Activated CD4-positive, alpha-beta T cell treated with anti-CD3 and anti-CD28 coated beads for 36 hours (primary cell): ENCODE measurements at regions of chr7 and their contacts with region 1.

Region 1: GRCh38 chr7:44490351-44491200 is at the start of gene NUDCD3:
- DNase-seq: peak; percentile 88
- ATAC-seq: peak; percentile 74
- H3K4me3 Mint-ChIP-seq: peak within 1 kb of the TSS; percentile 86
- H3K27ac Mint-ChIP-seq: peak within 1 kb of the TSS; percentile 100
- H3K4me1 Mint-ChIP-seq: peaks cover 42% of the 10 kb centered on the region
- H3K27me3 Mint-ChIP-seq: peaks cover 3% of the 10 kb centered on the region
- total RNA-seq, gene NUDCD3: 70.3 to 77.6 TPM

Region 2: GRCh38 chr7:43625453-43625852 is 865.1 kb before region 1 on chr7:
- CTCF ChIA-PET with region 1: no interaction called
- POLR2A ChIA-PET with region 1: no interaction called
- intact Hi-C with region 1: no loop called
- DNase-seq: peak; percentile 60
- ATAC-seq: peak; percentile 62
- H3K4me3 Mint-ChIP-seq: peak overlapping the region; percentile 7
- H3K27ac Mint-ChIP-seq: peak overlapping the region; percentile 63
- H3K4me1 Mint-ChIP-seq: peaks cover 91% of the 10 kb centered on the region
- H3K27me3 Mint-ChIP-seq: no peaks in the 10 kb centered on the region

Region 3: DNA sequence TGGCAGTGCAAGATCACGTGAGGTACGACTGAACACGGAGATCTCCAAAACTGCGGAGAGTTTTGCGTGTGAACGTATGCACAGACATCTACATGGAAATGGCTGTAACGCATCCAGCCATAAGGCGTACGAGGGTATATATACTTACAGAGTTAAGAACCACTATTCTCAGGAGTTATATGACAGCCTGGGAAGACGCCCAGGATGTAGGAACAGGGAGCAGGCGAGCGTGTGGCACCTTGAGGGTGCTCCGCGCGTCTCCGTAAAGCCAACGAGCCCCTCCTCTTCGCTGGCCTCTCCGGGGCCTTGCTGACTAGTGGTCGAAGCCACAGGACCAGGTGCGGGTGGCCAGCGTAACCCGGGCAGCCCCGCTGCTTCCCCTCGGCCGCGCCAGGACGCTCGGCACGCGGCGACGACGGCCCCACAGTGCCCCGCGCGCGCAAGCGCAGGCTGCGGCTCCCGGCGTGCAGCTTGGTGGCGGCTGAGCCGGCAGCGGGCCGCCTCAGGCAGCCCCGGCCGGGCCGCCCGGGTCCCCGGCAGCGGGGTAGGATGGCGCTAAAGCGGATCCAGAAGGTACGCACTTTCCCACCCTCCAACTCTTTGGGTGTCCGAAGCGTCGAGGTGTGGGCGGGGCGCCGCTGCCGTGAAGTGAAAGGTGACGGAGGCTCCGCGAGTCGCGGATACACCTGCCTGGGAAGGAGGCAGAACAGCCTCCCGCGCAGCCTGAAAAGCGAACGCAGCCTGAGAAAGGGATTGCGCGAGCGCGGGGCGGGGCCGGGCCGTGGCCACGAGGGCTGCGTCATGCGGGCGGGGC is 564.4 kb before region 1 on chr7 and contains the start of gene UBE2D4:
- CTCF ChIA-PET with region 1: no interaction called
- POLR2A ChIA-PET with region 1: no interaction called
- intact Hi-C with region 1: loop called in 1 of 2 experiments (anchors 1 kb)
- DNase-seq: peak; percentile 94
- ATAC-seq: peak; percentile 92
- H3K4me3 Mint-ChIP-seq: peak within 1 kb of the TSS; percentile 91
- H3K27ac Mint-ChIP-seq: peak within 1 kb of the TSS; percentile 98
- H3K4me1 Mint-ChIP-seq: peaks cover 29% of the 10 kb centered on the region
- H3K27me3 Mint-ChIP-seq: no peaks in the 10 kb centered on the region
- total RNA-seq, gene UBE2D4: 10.1 to 10.7 TPM

Region 4: DNA sequence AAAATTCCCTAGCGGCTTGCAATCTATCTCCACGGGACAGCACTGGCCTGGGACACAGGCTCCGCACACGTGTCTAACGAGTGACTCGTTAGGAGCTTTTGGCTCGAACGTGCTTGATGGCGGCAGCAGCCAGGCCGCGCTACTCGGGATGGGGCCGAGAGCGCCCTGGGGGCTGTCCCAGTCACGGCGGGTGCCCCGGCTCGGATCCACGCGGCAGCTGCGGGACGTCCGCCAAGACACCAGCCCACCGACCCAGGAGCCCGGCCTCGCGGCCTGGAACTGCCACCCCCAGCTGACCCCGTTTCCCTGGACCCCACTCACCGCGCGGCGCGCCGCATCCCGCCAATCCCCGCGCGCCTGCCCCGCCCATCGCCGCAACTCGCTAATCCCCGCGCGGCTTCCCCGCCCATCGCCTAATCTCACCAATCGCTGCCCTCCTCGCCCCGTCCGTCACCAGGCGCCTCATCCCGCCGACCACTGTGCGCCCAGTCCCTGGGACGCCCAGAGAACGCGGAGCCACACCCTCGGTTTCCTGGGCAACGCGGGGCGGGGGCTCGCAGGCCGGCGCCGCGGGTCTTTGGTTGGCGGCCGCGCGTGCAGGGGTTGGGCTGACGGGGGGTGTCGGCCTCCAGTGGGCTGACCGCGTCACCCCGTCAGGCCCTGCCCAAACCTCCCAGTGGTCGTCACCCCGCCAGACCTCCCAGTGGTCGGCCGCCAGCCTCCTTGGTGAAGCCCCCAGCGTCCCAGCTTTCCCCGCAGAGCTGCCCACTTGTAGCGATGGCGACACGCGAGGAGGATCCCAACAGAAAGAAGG is 367.2 kb before region 1 on chr7 and contains the start of gene POLD2:
- CTCF ChIA-PET with region 1: no interaction called
- POLR2A ChIA-PET with region 1: no interaction called
- intact Hi-C with region 1: loop called in 1 of 2 experiments (anchors 1 kb)
- DNase-seq: peak; percentile 99
- ATAC-seq: peak; percentile 100
- H3K4me3 Mint-ChIP-seq: peak within 1 kb of the TSS; percentile 86
- H3K27ac Mint-ChIP-seq: peak within 1 kb of the TSS; percentile 89
- H3K4me1 Mint-ChIP-seq: peaks cover 42% of the 10 kb centered on the region
- H3K27me3 Mint-ChIP-seq: no peaks in the 10 kb centered on the region
- total RNA-seq, gene POLD2: 250 to 347 TPM

Region 5: DNA sequence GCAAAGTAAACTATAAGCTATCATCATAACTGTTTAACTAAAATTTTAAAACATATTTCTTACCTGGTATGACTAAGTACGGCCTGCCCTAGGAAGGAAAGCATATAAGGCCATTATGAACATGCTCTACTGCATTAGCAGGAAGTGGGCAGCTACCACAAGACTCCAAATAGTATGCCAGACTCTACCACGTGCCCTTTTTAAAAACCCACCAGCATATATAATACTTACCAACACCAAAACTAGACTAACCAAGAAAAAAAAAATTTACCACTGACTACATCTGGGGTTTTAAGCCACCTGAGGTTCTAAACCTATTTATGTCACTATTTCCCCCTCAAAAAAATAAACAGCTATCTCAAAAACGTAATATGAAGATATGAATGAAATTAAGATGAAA is 30.3 kb before region 1 on chr7:
- CTCF ChIA-PET with region 1: interaction called, 3 read pairs
- POLR2A ChIA-PET with region 1: interaction called, 4 read pairs
- intact Hi-C with region 1: loop called (anchors 1 kb)
- DNase-seq: peak; percentile 72
- ATAC-seq: peak; percentile 85
- H3K4me3 Mint-ChIP-seq: peak overlapping the region; percentile 55
- H3K27ac Mint-ChIP-seq: peak overlapping the region; percentile 100
- H3K4me1 Mint-ChIP-seq: peaks cover 66% of the 10 kb centered on the region
- H3K27me3 Mint-ChIP-seq: no peaks in the 10 kb centered on the region

Region 6: GRCh38 chr7:44573464-44574286 is 83.1 kb after region 1 on chr7 and contains the start of gene DDX56:
- CTCF ChIA-PET with region 1: interaction called, 3 read pairs
- POLR2A ChIA-PET with region 1: interaction called, 3 read pairs
- intact Hi-C with region 1: loop called (anchors 2 to 5 kb)
- DNase-seq: peak; percentile 97
- ATAC-seq: peak; percentile 98
- H3K4me3 Mint-ChIP-seq: peak within 1 kb of the TSS; percentile 90
- H3K27ac Mint-ChIP-seq: peak within 1 kb of the TSS; percentile 94
- H3K4me1 Mint-ChIP-seq: peaks cover 41% of the 10 kb centered on the region
- H3K27me3 Mint-ChIP-seq: no peaks in the 10 kb centered on the region
- total RNA-seq, gene DDX56: 98.5 to 104 TPM

Region 7: DNA sequence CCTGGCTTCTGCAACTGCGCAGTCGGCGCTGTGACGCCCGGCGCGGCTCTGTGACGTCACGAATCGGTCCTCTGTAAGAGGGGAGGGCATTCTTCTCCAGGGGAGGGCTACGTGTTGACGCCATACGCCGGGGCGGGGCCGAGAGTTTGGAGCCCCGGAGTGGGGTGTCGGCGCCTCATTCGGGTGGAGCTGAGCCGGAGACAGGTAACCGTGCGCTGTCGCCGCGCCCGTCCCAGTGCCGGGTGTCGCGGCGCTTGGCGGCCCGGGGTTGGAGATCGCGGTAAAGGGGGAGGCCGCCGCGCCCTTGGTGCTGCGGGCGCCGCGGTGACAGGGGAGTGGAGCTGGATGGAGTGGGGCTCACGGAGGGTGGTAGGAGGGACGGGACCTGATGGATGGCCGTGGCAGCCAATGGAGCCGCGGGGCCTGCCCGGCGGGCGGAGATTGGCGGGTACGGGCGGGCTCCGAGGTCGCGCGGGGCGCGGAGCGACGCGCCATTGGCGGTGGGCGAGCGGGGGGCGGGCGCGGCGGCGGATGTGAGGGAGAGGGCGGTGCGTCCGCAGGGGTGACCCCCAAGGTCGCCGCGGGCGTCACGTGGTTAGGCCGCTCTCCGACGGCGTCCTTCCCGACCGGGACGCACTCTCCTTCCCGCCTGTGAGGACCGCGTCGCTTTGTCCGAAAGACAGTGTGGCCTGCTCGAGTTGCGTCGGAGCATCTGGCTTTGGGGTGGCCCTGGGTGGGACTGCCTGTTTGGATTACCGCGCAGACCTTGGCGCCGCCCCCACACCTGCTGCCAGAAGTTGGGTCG is 116.1 kb after region 1 on chr7 and contains the start of gene OGDH:
- CTCF ChIA-PET with region 1: interaction called, 4 read pairs
- POLR2A ChIA-PET with region 1: no interaction called
- intact Hi-C with region 1: loop called in 1 of 2 experiments (anchors 1 kb)
- DNase-seq: peak; percentile 100
- ATAC-seq: peak; percentile 98
- H3K4me3 Mint-ChIP-seq: peak within 1 kb of the TSS; percentile 92
- H3K27ac Mint-ChIP-seq: peak within 1 kb of the TSS; percentile 97
- H3K4me1 Mint-ChIP-seq: peaks cover 33% of the 10 kb centered on the region
- H3K27me3 Mint-ChIP-seq: no peaks in the 10 kb centered on the region
- total RNA-seq, gene OGDH: 80.3 to 90.1 TPM

Region 8: DNA sequence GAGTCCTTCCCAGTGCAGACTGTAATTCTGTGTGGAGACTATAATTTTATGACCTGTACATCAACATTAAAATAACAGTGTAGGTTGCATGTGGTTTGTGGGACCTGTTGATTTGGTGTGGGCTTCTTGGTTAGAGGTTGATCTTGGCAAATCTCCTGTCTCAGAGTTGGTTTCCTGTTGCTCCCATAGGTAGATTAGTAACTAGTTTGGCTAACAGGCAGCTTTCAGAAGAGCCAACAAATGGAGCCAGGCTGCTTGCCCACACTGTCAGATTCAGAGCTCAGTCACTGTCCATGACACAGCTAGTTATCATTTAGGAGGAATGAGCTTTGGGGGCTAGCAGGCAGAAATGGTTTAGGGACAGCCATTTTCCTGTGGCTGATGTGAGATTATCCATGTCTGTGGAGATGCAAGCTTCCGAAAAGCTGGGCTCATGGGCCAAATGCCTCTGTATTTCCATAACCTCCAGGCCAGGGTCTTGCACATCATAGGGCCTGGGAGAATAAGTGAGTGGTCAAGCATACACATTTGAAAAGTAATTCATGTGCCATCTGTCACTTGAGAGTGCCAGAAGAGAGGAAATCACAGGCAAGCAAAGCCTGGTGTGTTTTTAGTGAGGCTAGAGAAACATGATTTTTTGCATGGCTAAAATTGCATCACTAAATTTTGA is 542.8 kb after region 1 on chr7:
- CTCF ChIA-PET with region 1: no interaction called
- POLR2A ChIA-PET with region 1: no interaction called
- intact Hi-C with region 1: loop called in 1 of 2 experiments (anchors 10 kb)
- DNase-seq: no peak
- ATAC-seq: peak; percentile 21
- H3K4me3 Mint-ChIP-seq: peak overlapping the region; percentile 9
- H3K27ac Mint-ChIP-seq: peak overlapping the region; percentile 79
- H3K4me1 Mint-ChIP-seq: peaks cover 80% of the 10 kb centered on the region
- H3K27me3 Mint-ChIP-seq: no peaks in the 10 kb centered on the region